ENCODE measurements at regions of chr5 and their contacts with region 1.

Region 1: DNA sequence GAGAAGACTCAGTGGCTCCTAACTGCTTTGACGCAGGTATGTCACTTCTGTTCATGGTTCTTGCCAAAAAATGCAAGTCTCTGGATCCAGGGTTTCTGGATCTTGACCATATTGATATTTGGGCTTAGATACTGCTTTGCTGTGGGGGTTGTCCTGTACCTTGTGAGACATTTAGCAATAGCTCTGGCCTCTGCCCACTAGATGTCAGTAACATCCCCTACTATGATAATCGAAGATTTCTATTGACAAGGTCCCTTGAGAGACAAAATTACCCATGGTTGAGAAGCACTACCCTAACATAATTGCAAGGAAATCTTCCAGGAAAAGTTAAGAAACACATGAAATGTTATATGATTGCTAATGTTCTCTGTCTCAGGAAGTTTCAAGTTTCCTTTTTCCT is 285.4 kb downstream of the TMEM232 start:
- DNase-seq: peak; percentile 31
- ATAC-seq: peak; percentile 66
- H3K4me3 ChIP-seq: no peak overlapping the region
- H3K27ac ChIP-seq: no peak overlapping the region
- H3K4me1 ChIP-seq: no peaks in the 10 kb centered on the region
- H3K27me3 ChIP-seq: no peaks in the 10 kb centered on the region
- CTCF ChIP-seq: peak; percentile 45
- POLR2A ChIP-seq: no peak
- RAD21 ChIP-seq: peak; percentile 60

Region 2: GRCh38 chr5:110342683-110343082 is 98.4 kb before region 1 on chr5:
- CTCF ChIA-PET with region 1: no interaction called
- POLR2A ChIA-PET with region 1: no interaction called
- dilution Hi-C with region 1: no loop called
- in situ Hi-C with region 1: no loop called
- intact Hi-C with region 1: no loop called
- DNase-seq: no peak
- ATAC-seq: no peak
- H3K4me3 ChIP-seq: no peak overlapping the region
- H3K27ac ChIP-seq: no peak overlapping the region
- H3K4me1 ChIP-seq: no peaks in the 10 kb centered on the region
- H3K27me3 ChIP-seq: no peaks in the 10 kb centered on the region
- CTCF ChIP-seq: no peak
- POLR2A ChIP-seq: no peak
- RAD21 ChIP-seq: no peak

Region 3: DNA sequence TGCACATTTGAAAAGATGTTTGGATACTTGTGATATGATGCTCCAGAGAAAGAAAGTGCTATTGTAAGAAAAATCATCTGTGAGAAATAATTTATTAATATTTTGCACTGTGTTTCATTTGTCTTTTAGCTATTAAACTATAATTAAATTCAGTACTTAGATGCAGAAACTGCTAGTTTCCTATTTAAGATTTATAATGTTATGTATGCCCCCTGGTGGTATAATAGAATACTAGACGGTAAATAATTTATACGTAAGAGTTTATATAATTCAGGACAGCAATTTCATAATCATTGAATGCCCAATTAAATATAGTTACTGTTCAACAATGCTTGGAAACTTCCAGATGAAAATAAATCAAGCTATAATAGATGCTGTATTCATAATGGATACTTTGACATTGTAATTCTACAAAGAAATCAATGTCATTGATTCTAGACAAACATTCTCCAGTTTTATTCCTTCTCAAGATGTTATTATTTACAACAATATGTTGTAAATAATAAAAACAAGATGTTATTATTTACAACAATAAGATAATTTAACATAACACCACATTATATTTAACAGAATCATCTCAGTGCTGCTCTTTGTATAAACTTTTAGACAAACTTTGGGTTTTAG is 184.5 kb after region 1 on chr5:
- CTCF ChIA-PET with region 1: no interaction called
- POLR2A ChIA-PET with region 1: no interaction called
- dilution Hi-C with region 1: no loop called
- in situ Hi-C with region 1: no loop called
- intact Hi-C with region 1: loop called (anchors 1 kb)
- DNase-seq: peak; percentile 52
- ATAC-seq: peak; percentile 58; the same call in 1 of the 2 replicates
- H3K4me3 ChIP-seq: no peak overlapping the region
- H3K27ac ChIP-seq: no peak overlapping the region
- H3K4me1 ChIP-seq: no peaks in the 10 kb centered on the region; the same call in 1 of the 2 replicates
- H3K27me3 ChIP-seq: no peaks in the 10 kb centered on the region
- CTCF ChIP-seq: peak; percentile 57
- POLR2A ChIP-seq: no peak
- RAD21 ChIP-seq: peak; percentile 34

Region 4: DNA sequence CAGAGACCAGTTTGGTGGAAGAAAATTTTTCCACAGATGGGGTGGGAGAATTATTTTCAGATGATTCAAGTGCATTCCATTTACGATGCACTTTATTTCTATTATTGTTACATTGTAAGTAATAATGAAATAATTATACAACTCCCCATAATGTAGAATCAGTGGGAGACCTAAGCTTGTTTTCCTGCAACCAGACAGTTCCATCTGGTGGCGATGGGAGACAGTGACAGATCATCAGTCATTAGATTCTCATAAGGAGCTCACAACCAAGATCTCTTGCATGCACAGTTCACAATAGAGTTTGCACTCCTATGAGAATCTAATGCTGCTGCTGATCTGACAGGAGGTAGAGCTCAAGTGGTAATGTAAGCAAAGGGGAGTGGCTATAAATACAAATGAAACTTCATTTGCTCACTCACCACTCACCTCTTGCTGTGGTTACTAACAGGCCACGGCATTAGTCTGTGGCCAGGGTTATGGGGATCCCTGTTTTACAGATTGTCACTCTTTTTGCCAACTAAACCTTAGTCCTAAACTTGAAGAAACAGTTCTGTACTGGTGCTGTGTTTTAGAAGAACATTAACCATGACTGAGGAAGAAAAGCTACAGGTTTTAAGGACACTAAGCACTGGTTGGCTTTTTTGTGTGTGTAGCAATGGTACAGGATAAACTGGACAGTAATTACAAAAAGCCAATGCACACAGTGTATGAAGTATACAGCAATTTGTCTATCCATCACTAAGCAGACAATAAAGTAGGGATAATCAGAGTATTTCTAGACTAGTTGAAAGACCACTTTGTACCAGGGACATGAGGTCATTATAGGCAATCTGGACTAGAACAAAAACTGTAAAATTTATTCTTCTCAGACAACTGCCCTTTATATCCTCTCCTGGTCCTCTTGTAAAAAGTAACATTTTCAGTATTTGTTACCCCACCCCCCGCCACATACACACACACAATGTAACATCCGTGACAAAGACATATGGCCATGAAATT is 275.5 kb after region 1 on chr5:
- CTCF ChIA-PET with region 1: no interaction called
- POLR2A ChIA-PET with region 1: no interaction called
- dilution Hi-C with region 1: no loop called
- in situ Hi-C with region 1: no loop called
- intact Hi-C with region 1: loop called (anchors 10 kb)
- DNase-seq: no peak
- ATAC-seq: no peak
- H3K4me3 ChIP-seq: no peak overlapping the region
- H3K27ac ChIP-seq: no peak overlapping the region
- H3K4me1 ChIP-seq: no peaks in the 10 kb centered on the region
- H3K27me3 ChIP-seq: no peaks in the 10 kb centered on the region
- CTCF ChIP-seq: no peak
- POLR2A ChIP-seq: no peak
- RAD21 ChIP-seq: no peak